Naive thymus-derived CD8-positive, alpha-beta T cell (primary cell): ENCODE measurements at regions of chr2 and their contacts with region 1.

Region 1: GRCh38 chr2:241702132-241703031 is 543 bp downstream of the ING5 start:
- DNase-seq: peak; percentile 81 to 96 (median 90)
- ATAC-seq: peak; percentile 73 to 75
- H3K4me3 Mint-ChIP-seq: peak overlapping the region; percentile 76 to 92 (median 84)
- H3K27ac Mint-ChIP-seq: peak overlapping the region; percentile 66 to 93 (median 88)
- H3K4me1 Mint-ChIP-seq: peaks cover 16 to 34% (median 26%) of the 10 kb centered on the region in 4 donors
- H3K27me3 Mint-ChIP-seq: no peaks in the 10 kb centered on the region

Region 2: GRCh38 chr2:241315093-241315878 is 387.1 kb before region 1 on chr2 and contains the start of gene HDLBP:
- POLR2A ChIA-PET with region 1: interaction called, 14 read pairs
- DNase-seq: peak; percentile 99 to 100 (median 100)
- ATAC-seq: peak; percentile 73 to 75
- H3K4me3 Mint-ChIP-seq: peak within 1 kb of the TSS; percentile 92 to 100 (median 98)
- H3K27ac Mint-ChIP-seq: peak within 1 kb of the TSS; percentile 93 to 100 (median 99)
- H3K4me1 Mint-ChIP-seq: peaks cover 39 to 79% (median 75%) of the 10 kb centered on the region in 4 donors
- H3K27me3 Mint-ChIP-seq: peaks cover 0 to 2% (median 0%) of the 10 kb centered on the region in 5 donors
- polyA plus RNA-seq, gene HDLBP: 32.2 to 71.1 (median 45.7) TPM

Region 3: DNA sequence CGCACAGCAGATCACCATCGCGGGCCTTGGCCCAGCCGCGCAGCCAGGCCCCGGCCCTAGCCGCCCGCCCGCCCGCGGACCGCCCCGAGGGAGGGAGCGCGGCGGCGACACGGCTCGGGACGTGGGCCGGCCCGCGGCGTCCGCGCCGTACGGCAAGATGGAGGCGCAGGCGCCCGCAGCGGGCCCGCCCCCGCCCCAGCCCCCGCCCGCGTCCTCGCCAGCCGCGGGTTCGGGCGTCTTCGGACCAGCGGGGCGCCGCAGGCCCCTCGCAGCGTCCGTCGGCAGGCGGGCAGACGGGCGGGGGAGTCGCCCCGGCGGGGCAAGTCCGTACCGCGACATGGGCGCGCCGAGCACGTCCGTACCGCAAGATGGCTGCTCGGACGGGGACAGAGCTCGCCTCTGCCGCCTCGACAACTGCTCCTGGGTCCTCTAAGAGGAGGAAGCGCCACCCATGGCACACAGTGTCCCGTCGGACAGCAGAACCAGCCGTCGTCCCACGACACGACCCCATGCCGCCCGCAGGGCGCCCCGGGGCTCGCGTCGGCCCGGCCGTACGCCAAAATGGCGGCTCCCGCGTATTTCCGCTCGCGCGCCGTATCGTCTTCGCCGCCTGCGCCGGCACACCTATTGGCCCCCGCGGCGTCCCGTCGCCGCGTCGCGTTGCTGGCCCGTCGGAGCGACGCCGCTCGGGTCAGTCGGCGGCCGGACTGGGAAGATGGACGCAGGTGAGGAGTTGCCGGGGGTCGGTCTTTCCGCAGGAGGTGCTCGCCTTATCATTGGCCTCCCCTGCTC is 65.2 kb before region 1 on chr2 and contains the starts of genes ATG4B and THAP4:
- POLR2A ChIA-PET with region 1: interaction called, 13 read pairs
- DNase-seq: peak; percentile 55 to 93 (median 70)
- ATAC-seq: peak; percentile 67 to 73
- H3K4me3 Mint-ChIP-seq: peak within 1 kb of the TSS; percentile 80 to 98 (median 91)
- H3K27ac Mint-ChIP-seq: peak within 1 kb of the TSS; percentile 85 to 97 (median 94)
- H3K4me1 Mint-ChIP-seq: peaks cover 31 to 61% (median 57%) of the 10 kb centered on the region in 4 donors
- H3K27me3 Mint-ChIP-seq: no peaks in the 10 kb centered on the region
- polyA plus RNA-seq, gene ATG4B: 45.8 to 60.1 (median 46.5) TPM
- polyA plus RNA-seq, gene THAP4: 29.6 to 58.4 (median 38.9) TPM

Region 4: DNA sequence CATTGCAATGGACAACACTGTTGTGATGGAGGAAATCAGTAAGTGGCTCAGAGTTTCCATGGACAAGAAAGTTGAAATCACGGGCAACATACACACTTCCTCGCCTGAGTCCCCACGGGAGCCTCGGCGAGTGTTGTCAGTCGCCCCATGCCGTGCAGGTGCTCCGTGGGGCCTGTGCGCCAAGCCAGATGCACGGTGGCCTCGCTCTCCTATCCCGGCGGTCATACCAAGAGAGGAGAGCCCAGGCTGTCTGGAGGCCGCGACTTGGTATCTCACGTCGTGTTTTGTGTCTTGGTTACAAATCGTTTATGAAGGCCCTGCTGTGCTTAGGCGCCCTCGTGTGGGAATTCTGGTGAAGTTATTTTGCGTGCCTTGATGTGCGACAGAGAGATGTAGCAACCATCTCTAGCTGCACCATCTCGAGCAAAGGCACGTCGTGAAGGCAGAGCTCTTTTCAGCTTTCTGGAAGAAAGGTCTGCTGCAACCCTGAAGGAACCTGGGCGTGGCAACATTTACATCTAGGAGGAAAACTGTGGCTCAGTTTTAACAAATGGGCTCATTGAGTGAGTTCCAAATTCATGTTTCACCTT is 43.1 kb before region 1 on chr2:
- POLR2A ChIA-PET with region 1: no interaction called
- DNase-seq: peak in 4 of 10 donors; percentile 18 to 43 (median 38)
- ATAC-seq: peak in 1 of 2 donors; percentile 46
- H3K4me3 Mint-ChIP-seq: no peak overlapping the region
- H3K27ac Mint-ChIP-seq: peak overlapping the region in 1 of 10 donors; percentile 13
- H3K4me1 Mint-ChIP-seq: peaks cover 0 to 3% (median 0%) of the 10 kb centered on the region in 4 donors
- H3K27me3 Mint-ChIP-seq: no peaks in the 10 kb centered on the region

Region 5: DNA sequence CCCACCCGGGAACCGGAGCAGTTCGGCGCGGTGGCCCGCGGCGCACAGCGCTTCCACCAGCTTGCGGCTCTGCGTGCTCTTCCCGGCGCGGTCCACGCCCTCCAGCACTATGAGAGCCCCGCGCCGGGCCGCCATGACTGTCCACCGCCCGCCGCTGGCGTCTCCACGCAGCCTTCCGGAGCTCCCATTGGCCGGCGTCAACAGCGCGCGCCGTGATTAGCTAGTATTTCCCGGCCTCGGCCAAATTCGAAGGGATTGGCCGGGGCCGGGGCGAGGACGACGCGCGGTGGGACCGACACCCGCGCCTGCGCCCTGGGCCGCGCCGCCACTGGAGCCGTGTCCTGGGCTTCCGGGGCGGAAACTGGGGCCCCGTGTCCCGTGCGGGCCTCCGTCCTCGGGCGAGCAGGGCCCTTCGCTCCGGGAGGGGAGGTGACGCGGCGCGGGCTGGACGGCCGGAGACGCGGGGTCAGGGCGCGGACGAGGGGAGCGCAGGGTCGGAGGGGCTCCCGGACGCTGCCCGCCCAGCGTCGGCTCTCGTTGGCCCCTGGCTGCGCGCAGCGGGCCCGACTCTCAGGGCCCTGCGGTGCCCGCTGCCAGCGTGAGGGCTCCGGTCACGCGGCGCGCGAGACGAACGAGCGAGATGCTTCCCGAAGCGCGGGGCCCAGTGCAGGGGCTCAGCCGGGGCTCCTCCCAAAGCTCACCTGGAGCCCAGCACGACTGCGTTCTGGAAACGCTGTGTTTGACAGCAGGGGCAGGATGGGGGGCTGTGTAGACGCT is 15.5 kb before region 1 on chr2 and contains the start of gene DTYMK:
- POLR2A ChIA-PET with region 1: interaction called, 116 read pairs
- DNase-seq: peak; percentile 91 to 98 (median 95)
- ATAC-seq: peak; percentile 93 to 96
- H3K4me3 Mint-ChIP-seq: peak within 1 kb of the TSS; percentile 85 to 96 (median 90)
- H3K27ac Mint-ChIP-seq: peak within 1 kb of the TSS; percentile 75 to 97 (median 88)
- H3K4me1 Mint-ChIP-seq: peaks cover 10 to 34% (median 29%) of the 10 kb centered on the region in 4 donors
- H3K27me3 Mint-ChIP-seq: no peaks in the 10 kb centered on the region
- polyA plus RNA-seq, gene DTYMK: 36.3 to 40.7 (median 38.6) TPM

Region 6: DNA sequence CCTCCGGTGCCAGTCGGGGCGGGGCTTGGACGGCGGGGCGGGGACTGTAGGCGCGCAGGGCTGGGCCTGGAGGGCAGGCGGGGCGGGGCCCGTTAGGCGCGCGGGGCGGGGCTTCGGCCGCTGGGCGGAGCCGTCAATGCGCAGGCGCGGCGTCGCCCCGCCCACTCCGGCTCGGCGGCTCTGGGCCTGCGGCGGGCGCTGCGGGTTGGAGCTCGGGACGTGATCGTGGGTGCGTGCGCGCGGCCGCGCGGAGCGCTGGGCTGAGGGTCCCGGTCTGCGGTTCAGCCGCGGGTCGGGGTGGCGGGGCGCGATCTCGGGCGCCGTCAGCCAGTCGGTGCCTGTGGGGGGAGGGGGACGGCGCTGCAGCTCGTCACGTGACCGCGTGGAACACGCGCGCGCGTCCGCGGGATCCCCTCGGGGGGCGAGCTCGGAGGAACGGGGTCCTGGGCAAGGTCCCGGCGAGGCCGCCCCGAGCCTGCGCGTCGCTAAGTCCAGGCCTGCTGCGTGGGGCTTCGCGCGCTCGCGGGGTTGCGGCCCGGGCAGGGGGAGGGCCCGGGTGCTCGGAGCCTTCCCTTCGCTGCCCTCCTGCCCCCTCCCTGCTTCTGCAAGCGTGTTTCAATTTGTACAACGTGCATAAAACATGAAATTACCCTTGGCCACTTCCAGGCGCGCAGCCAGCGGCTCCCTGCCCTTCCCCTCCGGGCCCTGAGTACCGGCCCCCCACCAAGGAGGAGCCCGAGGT is 32.3 kb after region 1 on chr2 and contains the start of gene D2HGDH:
- POLR2A ChIA-PET with region 1: interaction called, 44 read pairs
- DNase-seq: peak; percentile 81 to 98 (median 93)
- ATAC-seq: peak; percentile 85 to 90
- H3K4me3 Mint-ChIP-seq: peak within 1 kb of the TSS; percentile 73 to 88 (median 82)
- H3K27ac Mint-ChIP-seq: peak within 1 kb of the TSS in 9 of 10 donors; percentile 38 to 91 (median 86)
- H3K4me1 Mint-ChIP-seq: peaks cover 10 to 45% (median 28%) of the 10 kb centered on the region in 4 donors
- H3K27me3 Mint-ChIP-seq: no peaks in the 10 kb centered on the region
- polyA plus RNA-seq, gene D2HGDH: 1.5 to 6.8 (median 2.7) TPM

Region 7: GRCh38 chr2:241833101-241833663 is 130.8 kb after region 1 on chr2:
- POLR2A ChIA-PET with region 1: no interaction called
- DNase-seq: no peak
- ATAC-seq: no peak
- H3K4me3 Mint-ChIP-seq: no peak overlapping the region
- H3K27ac Mint-ChIP-seq: no peak overlapping the region
- H3K4me1 Mint-ChIP-seq: peaks cover 0 to 2% (median 0%) of the 10 kb centered on the region in 4 donors
- H3K27me3 Mint-ChIP-seq: peaks cover 0 to 10% (median 0%) of the 10 kb centered on the region in 5 donors

Region 8: GRCh38 chr2:241877989-241878970 is 175.9 kb after region 1 on chr2:
- POLR2A ChIA-PET with region 1: interaction called, 16 read pairs
- DNase-seq: peak; percentile 52 to 86 (median 72)
- ATAC-seq: peak in 1 of 2 donors; percentile 16
- H3K4me3 Mint-ChIP-seq: no peak overlapping the region
- H3K27ac Mint-ChIP-seq: peak overlapping the region in 2 of 10 donors; percentile 31 to 62
- H3K4me1 Mint-ChIP-seq: peaks cover 17 to 31% (median 26%) of the 10 kb centered on the region in 4 donors
- H3K27me3 Mint-ChIP-seq: peaks cover 0 to 4% (median 0%) of the 10 kb centered on the region in 5 donors